ENCODE measurements at regions of chr4 and their contacts with region 1.

Region 1: GRCh38 chr4:181528570-181529184 is 714.5 kb upstream of the TENM3 start:
- DNase-seq: peak; percentile 59
- H3K27ac ChIP-seq: no peak overlapping the region
- CTCF ChIP-seq: peak; percentile 86

Region 2: DNA sequence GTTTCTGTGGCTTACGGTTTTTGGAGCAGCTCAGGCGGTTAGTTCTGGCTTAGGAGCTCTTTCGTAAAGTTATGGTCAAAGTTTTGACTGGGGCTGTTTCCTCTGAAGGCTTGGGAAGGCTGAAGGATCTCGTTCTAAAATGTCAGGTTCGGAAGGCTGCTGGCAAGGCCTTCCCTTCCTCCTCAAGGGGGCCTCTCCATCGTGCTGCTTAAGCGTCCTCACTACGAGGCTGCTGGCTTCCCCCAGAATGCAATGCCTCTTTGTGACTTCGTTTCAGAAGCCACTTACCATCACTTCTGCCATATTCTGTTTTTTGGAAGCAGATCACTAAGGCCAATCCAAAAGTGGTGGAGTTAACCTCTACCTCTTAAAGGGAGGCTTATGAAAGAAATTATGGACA is 481.9 kb before region 1 on chr4:
- CTCF ChIA-PET with region 1: no interaction called
- POLR2A ChIA-PET with region 1: no interaction called
- DNase-seq: no peak
- H3K27ac ChIP-seq: no peak overlapping the region
- CTCF ChIP-seq: no peak

Region 3: GRCh38 chr4:181143250-181143854 is 385.3 kb before region 1 on chr4:
- CTCF ChIA-PET with region 1: interaction called, 17 read pairs
- POLR2A ChIA-PET with region 1: no interaction called
- DNase-seq: peak; percentile 50
- H3K27ac ChIP-seq: no peak overlapping the region
- CTCF ChIP-seq: peak; percentile 85

Region 4: DNA sequence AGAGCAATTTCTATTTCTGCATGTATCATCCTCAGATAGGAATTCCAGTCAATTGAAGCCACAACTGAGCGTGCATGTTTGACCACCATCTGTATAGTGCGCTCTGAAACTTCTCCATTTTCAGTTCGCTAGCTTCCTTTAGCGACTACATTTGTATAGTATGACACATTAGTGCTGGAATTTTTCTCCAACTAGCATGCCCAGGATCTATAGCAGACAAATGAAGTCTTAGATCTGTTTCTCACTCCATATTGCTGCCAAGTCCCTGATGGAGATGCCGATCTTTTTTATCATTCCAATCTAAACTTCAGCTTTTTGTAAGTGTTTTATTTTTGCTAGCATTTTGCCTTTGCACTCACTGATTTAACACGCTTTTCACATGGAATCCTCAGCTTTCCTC is 60.2 kb before region 1 on chr4:
- CTCF ChIA-PET with region 1: interaction called, 10 read pairs
- POLR2A ChIA-PET with region 1: no interaction called
- DNase-seq: no peak
- H3K27ac ChIP-seq: no peak overlapping the region
- CTCF ChIP-seq: no peak